ENCODE measurements at regions of chr3 and their contacts with region 1.

Region 1: DNA sequence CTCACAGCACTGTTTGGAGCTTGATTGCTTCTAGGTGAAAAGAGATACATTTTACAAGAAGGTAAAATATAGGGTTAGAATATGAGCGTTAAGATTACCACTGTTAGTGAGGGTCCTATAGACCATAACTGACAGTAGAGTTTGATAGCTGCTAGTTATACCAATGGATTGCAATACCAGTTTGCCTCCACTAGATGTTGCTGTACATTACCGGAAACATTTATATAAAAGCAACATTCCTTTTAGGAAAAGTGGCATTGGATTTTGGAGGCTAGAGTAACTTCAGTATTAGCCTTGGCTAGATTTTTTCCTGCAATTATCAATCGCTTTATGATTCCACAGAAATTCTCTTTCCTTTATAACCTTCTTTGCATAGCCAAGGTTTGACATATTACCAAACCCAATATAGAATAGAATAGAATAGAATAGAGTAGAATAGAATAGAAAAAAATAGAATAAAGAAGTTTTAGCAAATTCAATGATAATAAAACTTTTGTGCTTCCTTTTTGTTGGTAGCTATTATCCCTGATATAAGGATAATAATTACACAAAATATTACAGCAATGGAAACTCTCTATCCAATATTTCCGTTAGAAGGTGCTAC is 1093.6 kb upstream of the ALCAM start:
- DNase-seq: no peak
- H3K4me3 ChIP-seq: no peak overlapping the region
- H3K27ac ChIP-seq: no peak overlapping the region
- H3K4me1 ChIP-seq: peaks cover 0 to 5% (median 2%) of the 10 kb centered on the region in 4 donors
- H3K27me3 ChIP-seq: no peaks in the 10 kb centered on the region
- CTCF ChIP-seq: peak; percentile 74 to 82

Region 2: DNA sequence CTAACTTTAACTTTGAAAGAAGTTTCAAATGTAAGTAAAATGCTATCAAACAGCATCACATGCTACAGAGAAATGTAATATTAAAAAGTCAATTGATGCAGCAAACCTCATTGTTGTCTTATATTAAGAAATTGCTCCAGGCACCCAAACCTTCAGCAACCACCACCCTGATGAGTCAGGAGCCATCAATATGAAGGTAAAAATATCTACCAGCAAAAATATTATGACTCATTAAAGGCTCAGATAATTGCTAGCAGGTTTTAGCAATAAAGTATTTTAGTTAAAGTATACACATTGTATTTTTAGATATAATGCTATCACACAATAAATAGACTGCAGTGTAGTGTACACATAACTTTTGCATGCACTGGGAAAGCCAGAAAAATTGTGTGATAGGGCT is 1092.0 kb before region 1 on chr3:
- intact Hi-C with region 1: no loop called
- DNase-seq: no peak
- H3K4me3 ChIP-seq: no peak overlapping the region
- H3K27ac ChIP-seq: no peak overlapping the region
- H3K4me1 ChIP-seq: no peaks in the 10 kb centered on the region
- H3K27me3 ChIP-seq: no peaks in the 10 kb centered on the region
- CTCF ChIP-seq: no peak

Region 3: GRCh38 chr3:105366326-105367062 is 1093.3 kb after region 1 on chr3 and contains the start of gene ALCAM:
- intact Hi-C with region 1: loop called (anchors 10 kb)
- DNase-seq: peak; percentile 93 to 97
- H3K4me3 ChIP-seq: peak within 1 kb of the TSS; percentile 62 to 67
- H3K27ac ChIP-seq: peak within 1 kb of the TSS; percentile 75 to 83
- H3K4me1 ChIP-seq: peaks cover 0 to 22% (median 0%) of the 10 kb centered on the region in 4 donors
- H3K27me3 ChIP-seq: no peaks in the 10 kb centered on the region
- CTCF ChIP-seq: peak; percentile 44 to 56

Region 4: GRCh38 chr3:105686278-105686897 is 1413.2 kb after region 1 on chr3:
- intact Hi-C with region 1: no loop called
- DNase-seq: no peak
- H3K4me3 ChIP-seq: no peak overlapping the region
- H3K27ac ChIP-seq: no peak overlapping the region
- H3K4me1 ChIP-seq: no peaks in the 10 kb centered on the region
- H3K27me3 ChIP-seq: no peaks in the 10 kb centered on the region
- CTCF ChIP-seq: peak; percentile 40 to 73

Measured in tibial artery (tissue), 4 donors.